Ascending aorta (tissue), 2 donors: ENCODE measurements at regions of chr10 and their contacts with region 1.

Region 1: DNA sequence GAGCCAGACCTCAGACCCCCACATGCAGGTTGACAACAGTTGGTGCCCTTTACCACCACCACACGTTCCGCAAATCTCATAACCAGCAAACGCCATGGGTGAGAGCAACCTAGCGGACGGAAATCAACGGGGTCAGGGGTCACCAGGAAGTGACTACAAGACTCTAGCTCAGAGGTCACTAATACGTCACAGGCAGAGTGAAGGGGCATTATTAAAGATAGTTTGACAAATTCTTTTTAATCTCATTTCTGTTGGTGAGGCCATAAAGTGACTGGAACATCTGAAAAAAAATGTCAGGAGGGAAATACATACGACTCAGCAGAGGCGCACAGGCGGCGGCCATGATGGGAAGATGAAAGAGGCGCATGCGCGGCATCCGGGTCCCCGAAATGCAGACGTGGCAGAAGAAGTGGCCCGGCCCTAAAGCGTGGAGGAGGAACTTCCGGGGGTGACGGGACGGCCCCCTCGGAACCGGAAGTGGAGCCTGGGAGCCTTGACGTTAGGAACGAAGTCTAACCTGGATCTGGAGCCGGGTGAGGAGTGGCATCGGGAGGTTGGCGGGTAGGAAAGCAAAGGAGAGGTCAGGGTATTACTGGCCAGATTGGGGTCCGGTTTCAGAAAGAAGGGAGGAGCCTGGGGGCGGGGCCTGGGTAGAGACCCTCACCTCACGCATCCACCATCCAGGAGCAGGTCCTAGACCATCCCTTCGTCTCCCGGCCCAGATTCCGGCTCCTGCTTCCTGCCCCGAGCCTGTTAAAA is at the start of gene SEC24C:
- DNase-seq: peak; percentile 87 to 98
- H3K4me3 ChIP-seq: peak within 1 kb of the TSS; percentile 73 to 82
- H3K27ac ChIP-seq: peak within 1 kb of the TSS; percentile 95 to 96
- H3K4me1 ChIP-seq: peaks cover 12 to 25% of the 10 kb centered on the region in 2 donors
- H3K27me3 ChIP-seq: no peaks in the 10 kb centered on the region
- CTCF ChIP-seq: no peak
- total RNA-seq, gene SEC24C: 65.9 TPM

Region 2: DNA sequence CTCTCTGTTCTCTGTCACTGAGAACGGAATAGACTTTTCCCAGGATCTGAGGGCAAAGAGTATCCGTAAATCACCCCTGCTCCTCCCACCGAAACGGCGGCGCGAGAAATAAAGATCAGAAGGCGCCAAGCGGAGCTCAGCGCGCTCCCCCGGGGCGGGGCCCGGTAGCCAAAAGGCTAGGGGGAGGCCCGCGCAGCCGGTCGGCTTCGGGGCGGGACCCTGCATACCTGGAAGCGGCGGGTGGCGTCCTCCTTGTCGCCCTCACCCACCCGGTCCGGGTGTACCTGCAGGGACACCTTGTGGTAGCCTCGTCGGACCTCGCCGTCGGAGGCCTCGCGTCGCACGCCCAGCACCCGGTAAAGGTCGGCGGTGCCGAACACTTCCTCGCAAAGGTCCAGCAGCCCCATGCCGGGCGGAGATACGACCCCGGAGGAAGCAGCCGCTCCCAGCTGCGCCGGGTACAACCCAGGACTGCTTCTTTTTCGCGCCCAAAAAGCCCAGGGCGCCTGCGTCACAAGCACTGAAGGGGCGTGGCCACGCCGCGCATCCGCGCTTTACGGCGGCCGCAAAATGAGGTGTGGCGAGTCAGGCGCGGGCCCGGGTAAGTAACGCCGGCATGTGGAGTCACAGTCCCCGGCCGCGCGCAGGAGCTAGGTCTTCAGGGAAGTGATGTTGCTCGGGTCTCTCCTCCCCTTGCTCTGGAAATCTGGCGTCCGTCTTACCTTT is 497.1 kb before region 1 on chr10 and contains the start of gene DNAJC9:
- intact Hi-C with region 1: loop called (anchors 10 kb)
- DNase-seq: peak; percentile 90 to 99
- H3K4me3 ChIP-seq: peak within 1 kb of the TSS; percentile 92 to 93
- H3K27ac ChIP-seq: peak within 1 kb of the TSS; percentile 71 to 83
- H3K4me1 ChIP-seq: peaks cover 6 to 27% of the 10 kb centered on the region in 2 donors
- H3K27me3 ChIP-seq: no peaks in the 10 kb centered on the region
- CTCF ChIP-seq: no peak
- total RNA-seq, gene DNAJC9: 5.3 TPM

Region 3: DNA sequence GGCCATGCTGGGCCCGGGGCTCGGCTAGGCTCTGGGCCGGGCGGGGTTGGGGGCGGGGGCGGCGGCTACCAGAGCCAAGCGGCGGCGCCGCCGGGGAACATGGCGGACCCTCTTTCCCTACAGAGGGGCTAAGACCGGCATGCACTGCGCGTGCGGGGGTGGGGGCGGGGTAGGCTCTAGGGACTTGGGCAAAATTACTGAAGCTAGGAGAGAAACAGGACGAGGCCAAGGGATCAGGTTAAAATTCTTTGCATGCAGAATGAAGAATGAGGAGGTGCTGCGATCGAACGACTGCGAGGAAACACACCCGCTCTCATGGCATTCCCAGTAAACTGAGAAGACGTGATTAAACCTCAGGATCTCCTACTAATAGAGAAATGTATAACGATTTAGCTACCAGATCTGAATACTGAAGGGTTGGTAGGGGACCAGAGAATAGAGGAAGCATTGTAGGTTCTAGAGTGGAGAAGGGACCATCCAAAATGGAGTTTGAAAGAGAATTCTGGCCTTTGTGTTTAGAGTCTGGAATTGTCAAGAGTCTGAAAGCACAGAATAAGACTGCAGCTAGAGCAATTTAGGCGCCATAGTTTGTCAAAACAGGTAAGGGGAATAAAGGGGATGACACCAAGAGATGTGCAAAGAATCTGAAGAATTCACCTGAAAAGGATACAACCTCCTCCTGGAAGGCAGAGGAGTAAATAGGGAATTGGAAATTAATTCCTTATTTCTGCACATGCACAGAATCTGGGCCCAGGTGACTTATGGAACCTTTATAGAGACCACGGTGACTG is 248.0 kb before region 1 on chr10 and contains the start of gene PPP3CB:
- intact Hi-C with region 1: no loop called
- DNase-seq: peak; percentile 75 to 95
- H3K4me3 ChIP-seq: peak within 1 kb of the TSS; percentile 63 to 88
- H3K27ac ChIP-seq: peak within 1 kb of the TSS; percentile 95 to 97
- H3K4me1 ChIP-seq: peaks cover 6 to 19% of the 10 kb centered on the region in 2 donors
- H3K27me3 ChIP-seq: no peaks in the 10 kb centered on the region
- CTCF ChIP-seq: no peak
- total RNA-seq, gene PPP3CB: 23.0 TPM

Region 4: DNA sequence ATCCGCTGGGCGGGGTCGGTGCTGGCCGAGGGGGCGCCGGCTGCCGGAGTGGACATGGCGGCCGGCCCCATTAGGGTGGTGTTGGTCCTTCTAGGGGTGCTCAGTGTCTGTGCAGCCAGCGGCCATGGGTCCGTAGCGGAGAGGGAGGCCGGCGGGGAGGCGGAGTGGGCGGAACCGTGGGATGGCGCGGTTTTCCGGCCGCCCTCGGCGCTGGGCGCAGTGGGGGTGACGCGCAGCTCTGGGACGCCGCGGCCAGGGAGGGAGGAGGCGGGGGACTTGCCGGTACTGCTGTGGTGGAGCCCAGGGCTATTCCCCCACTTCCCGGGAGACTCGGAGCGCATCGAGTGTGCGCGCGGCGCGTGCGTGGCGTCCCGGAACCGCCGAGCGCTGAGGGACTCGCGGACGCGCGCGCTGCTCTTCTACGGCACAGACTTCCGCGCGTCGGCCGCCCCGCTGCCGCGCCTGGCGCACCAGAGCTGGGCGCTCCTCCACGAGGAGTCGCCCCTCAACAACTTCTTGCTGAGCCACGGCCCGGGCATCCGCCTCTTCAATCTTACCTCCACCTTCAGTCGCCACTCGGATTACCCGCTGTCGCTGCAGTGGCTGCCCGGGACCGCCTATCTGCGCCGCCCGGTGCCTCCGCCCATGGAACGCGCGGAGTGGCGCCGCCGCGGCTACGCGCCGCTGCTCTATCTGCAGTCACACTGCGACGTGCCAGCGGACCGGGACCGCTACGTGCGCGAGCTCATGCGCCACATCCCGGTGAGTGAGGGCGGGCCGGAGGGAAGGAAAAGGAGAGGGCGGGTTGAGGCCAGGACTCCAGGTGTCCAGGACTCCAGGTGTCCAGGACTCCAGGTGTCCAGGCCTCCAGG is 28.4 kb after region 1 on chr10:
- intact Hi-C with region 1: loop called (anchors 1 kb)
- DNase-seq: peak; percentile 45 to 93
- H3K4me3 ChIP-seq: peak overlapping the region; percentile 76 to 91
- H3K27ac ChIP-seq: peak overlapping the region; percentile 95 to 99
- H3K4me1 ChIP-seq: peaks cover 11 to 23% of the 10 kb centered on the region in 2 donors
- H3K27me3 ChIP-seq: no peaks in the 10 kb centered on the region
- CTCF ChIP-seq: peak in 2 of 3 experiments; percentile 2 to 24

Region 5: GRCh38 chr10:73785221-73785720 is 41.2 kb after region 1 on chr10 and contains the start of gene ZSWIM8:
- intact Hi-C with region 1: loop called (anchors 1 kb)
- DNase-seq: peak; percentile 81 to 96
- H3K4me3 ChIP-seq: peak within 1 kb of the TSS; percentile 89 to 92
- H3K27ac ChIP-seq: peak within 1 kb of the TSS; percentile 88 to 92
- H3K4me1 ChIP-seq: peaks cover 15 to 35% of the 10 kb centered on the region in 2 donors
- H3K27me3 ChIP-seq: no peaks in the 10 kb centered on the region
- CTCF ChIP-seq: no peak
- total RNA-seq, gene ZSWIM8: 106 TPM

Region 6: DNA sequence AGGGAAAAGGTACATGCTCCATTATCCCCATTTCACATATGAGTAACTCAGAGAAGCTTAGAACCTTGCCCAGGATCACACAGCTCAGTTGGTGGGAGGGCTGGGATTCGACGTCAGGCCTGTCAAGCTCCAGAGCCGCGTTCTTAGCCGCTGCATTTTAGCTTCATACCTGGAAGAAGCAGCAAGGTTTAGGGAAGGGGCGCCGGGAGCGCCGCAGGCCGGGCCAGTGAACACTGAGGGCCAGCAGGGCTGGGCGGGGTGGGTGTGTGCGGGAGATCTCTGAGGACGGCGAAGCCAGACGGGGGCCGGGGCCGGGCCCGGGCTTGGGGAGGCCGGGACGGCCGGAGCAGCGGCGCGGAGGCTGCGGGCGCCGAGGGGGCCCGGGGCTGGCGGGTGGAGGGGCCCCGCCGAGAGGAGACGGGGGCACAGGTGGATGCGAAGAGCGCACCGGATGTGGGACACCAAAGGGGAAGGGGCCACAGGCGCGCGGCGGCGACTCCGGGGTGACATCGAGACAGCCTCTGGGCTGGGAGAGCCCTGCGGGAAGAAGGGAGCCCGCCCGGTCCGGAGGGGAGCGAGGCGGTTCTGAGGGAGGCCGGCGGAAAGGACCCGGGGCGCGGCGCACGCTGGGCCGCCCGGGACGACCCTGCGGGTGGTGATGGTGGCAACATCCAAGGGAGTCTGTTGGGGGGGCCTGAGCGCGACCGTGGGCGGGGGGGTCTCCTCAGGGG is 66.8 kb after region 1 on chr10:
- intact Hi-C with region 1: loop called (anchors 1 kb)
- DNase-seq: no peak
- H3K4me3 ChIP-seq: peak overlapping the region; percentile 85 to 97
- H3K27ac ChIP-seq: peak overlapping the region; percentile 94 to 97
- H3K4me1 ChIP-seq: peaks cover 8 to 26% of the 10 kb centered on the region in 2 donors
- H3K27me3 ChIP-seq: no peaks in the 10 kb centered on the region
- CTCF ChIP-seq: no peak